ENCODE measurements at regions of chr4 and their contacts with region 1.

Region 1: DNA sequence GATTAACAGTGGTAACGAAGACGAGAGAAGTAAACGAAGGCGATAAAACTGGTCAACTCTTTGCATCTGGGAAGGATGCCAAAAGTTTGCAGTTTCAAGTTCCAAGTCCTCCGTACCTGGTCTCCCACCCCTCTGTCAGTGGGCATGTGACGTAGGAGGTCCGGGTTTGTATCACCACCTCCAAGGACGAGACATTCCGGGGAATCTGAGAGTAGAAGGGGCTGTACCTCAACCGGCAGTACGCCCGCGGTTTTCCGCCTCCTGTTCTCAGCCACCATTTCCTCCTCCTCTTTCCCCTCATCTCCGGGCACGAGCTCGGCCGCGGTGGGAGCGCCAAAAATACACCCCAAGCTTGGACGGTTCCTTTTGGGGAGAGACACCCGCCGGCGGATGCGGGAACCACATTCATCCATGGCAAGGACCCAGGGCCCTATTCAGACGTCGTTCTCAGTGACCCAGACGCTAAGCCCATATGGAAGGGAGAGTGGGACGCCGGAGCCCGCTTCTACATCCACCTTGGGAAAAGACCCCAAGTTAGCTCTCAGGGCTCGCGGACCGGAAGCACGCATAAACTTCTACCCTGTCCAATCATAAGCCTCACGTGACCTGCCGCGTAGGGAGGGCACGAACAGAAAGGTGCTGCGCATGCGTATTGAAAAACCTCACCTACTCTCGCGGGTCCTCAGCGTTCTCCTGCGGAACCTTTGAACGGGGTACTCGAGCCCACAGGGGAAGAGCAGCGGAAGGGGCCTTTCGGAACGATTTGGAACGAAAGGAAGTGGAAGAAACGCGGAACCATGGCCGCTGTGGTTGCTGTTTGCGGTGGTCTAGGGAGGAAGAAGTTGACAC is at the starts of genes HELQ and MRPS18C:
- DNase-seq: peak; percentile 98
- ATAC-seq: peak; percentile 95
- H3K4me3 ChIP-seq: peak within 1 kb of the TSS; percentile 84
- H3K27ac ChIP-seq: peak within 1 kb of the TSS; percentile 99
- H3K4me1 ChIP-seq: no peaks in the 10 kb centered on the region
- H3K27me3 ChIP-seq: no peaks in the 10 kb centered on the region
- CTCF ChIP-seq: peak in 2 of 3 experiments; percentile 4 to 33; a peak in 1 of 6 replicates
- EP300 ChIP-seq: 0 out of 4 replicates have a peak, but pooled peaks of 1 of the 2 experiments have one; percentile 20
- POLR2A ChIP-seq: peak; percentile 97
- RAD21 ChIP-seq: no peak
- polyA plus RNA-seq, gene HELQ: 4.5 to 4.6 TPM
- polyA plus RNA-seq, gene MRPS18C: 277 to 283 TPM

Region 2: GRCh38 chr4:82890901-82891706 is 564.4 kb before region 1 on chr4 and contains the start of gene SEC31A:
- CTCF ChIA-PET with region 1: no interaction called
- POLR2A ChIA-PET with region 1: no interaction called
- RAD21 ChIA-PET with region 1: no interaction called
- SMC1A ChIA-PET with region 1: no interaction called
- in situ Hi-C with region 1: no loop called
- intact Hi-C with region 1: loop called (anchors 5 kb)
- DNase-seq: peak; percentile 84
- ATAC-seq: peak; percentile 90
- H3K4me3 ChIP-seq: peak within 1 kb of the TSS; percentile 90
- H3K27ac ChIP-seq: peak within 1 kb of the TSS; percentile 94
- H3K4me1 ChIP-seq: peaks cover 3% of the 10 kb centered on the region; the same call in 1 of the 2 replicates
- H3K27me3 ChIP-seq: no peaks in the 10 kb centered on the region
- CTCF ChIP-seq: 0 out of 6 replicates have a peak, but pooled peaks of 1 of the 3 experiments have one; percentile 15
- EP300 ChIP-seq: peak in 1 of 2 experiments; percentile 31; a peak in 1 of 4 replicates
- POLR2A ChIP-seq: peak; percentile 99
- RAD21 ChIP-seq: no peak
- polyA plus RNA-seq, gene SEC31A: 74.6 to 80.8 TPM

Region 3: GRCh38 chr4:83034630-83035494 is 420.6 kb before region 1 on chr4 and contains the start of gene COPS4:
- CTCF ChIA-PET with region 1: interaction called, 3 read pairs
- POLR2A ChIA-PET with region 1: interaction called, 4 read pairs
- RAD21 ChIA-PET with region 1: no interaction called
- SMC1A ChIA-PET with region 1: no interaction called
- in situ Hi-C with region 1: no loop called
- intact Hi-C with region 1: loop called (anchors 10 kb)
- DNase-seq: peak; percentile 100
- ATAC-seq: peak; percentile 96
- H3K4me3 ChIP-seq: peak within 1 kb of the TSS; percentile 78
- H3K27ac ChIP-seq: peak within 1 kb of the TSS; percentile 77
- H3K4me1 ChIP-seq: peaks cover 6% of the 10 kb centered on the region
- H3K27me3 ChIP-seq: no peaks in the 10 kb centered on the region
- CTCF ChIP-seq: peak in 1 of 3 experiments; percentile 17; a peak in 1 of 6 replicates
- EP300 ChIP-seq: peak; percentile 42 to 66; a peak in 3 of 4 replicates
- POLR2A ChIP-seq: peak; percentile 74
- RAD21 ChIP-seq: 0 out of 2 replicates have a peak, but pooled peaks have one; percentile 15
- polyA plus RNA-seq, gene COPS4: 112 to 159 TPM

Region 4: DNA sequence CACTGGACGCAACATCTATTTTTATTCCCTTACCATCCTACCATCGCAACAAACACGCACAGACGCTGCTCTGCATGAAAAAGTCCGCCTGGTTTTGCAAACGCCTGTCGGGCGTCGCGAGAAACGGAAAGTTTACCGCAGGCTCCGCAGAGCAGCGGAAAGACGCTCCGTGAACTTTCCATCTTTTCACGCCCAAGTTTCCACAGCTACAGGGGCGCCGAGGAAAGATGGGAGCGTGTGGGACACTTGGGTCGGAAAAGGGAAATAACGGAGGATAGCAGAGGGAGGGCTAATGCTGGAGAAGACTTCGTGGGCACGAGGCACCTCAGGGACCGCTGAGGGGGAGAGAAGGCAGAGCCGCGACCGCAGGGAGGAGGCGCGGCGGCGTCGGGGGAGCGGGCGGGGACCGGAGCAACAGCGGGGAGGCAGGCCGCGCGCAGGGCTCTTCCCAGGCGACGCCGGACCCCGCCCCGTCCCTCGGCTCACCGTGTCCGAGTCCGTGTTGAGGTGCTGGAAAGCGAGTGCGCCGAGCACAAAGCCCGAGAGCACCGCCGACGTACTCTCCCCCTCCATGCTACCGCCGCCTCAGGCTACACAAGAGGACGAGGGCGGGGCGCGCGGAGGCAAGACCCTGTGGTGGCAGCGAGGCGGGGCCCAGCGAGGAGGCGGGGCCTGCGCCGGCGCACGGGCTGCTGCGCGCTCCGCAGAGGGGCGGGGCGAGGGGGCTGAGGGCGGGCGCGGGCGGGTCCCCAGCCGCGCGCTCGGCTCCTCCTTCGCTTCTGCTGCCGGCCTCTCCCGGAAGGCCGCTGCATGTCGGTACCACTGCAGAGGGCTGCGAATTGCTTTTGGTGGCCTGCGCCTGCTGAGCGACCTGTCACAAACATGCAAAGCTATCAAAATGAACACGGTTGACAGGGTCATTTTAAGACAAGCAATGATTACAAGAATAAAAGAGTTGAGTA is 29.3 kb after region 1 on chr4 and contains the start of gene ABRAXAS1:
- CTCF ChIA-PET with region 1: interaction called, 3 read pairs
- POLR2A ChIA-PET with region 1: interaction called, 5 read pairs
- RAD21 ChIA-PET with region 1: no interaction called
- SMC1A ChIA-PET with region 1: interaction called, 6 read pairs
- in situ Hi-C with region 1: no loop called
- intact Hi-C with region 1: loop called (anchors 2 kb)
- DNase-seq: peak; percentile 45
- ATAC-seq: peak; percentile 98
- H3K4me3 ChIP-seq: peak within 1 kb of the TSS; percentile 75
- H3K27ac ChIP-seq: peak within 1 kb of the TSS; percentile 24
- H3K4me1 ChIP-seq: peaks cover 6% of the 10 kb centered on the region; the same call in 1 of the 2 replicates
- H3K27me3 ChIP-seq: no peaks in the 10 kb centered on the region
- CTCF ChIP-seq: no peak
- EP300 ChIP-seq: no peak
- POLR2A ChIP-seq: peak; percentile 93
- RAD21 ChIP-seq: no peak
- polyA plus RNA-seq, gene ABRAXAS1: 2.2 to 3.2 TPM

Region 5: DNA sequence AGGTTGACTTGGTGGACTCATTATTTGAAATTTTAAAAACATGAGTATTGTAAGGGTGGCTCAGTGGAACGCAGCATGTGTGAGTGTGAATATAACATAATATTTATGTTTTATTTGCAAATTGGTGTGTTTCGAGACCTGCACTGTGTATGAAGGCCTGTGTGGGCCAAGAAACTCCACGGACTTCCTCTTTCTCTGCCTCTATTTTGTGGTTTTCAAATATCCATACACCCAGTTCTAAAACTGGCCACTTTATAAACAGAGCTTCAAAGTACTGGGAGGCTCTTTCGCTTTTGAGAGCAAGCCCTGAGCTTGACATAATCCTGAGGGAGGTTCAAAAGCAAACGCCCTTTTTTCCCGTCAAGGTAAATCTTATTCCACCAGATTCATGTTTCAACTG is 268.1 kb after region 1 on chr4:
- CTCF ChIA-PET with region 1: no interaction called
- POLR2A ChIA-PET with region 1: no interaction called
- RAD21 ChIA-PET with region 1: no interaction called
- SMC1A ChIA-PET with region 1: no interaction called
- in situ Hi-C with region 1: no loop called
- intact Hi-C with region 1: no loop called
- DNase-seq: no peak
- ATAC-seq: no peak
- H3K4me3 ChIP-seq: no peak overlapping the region
- H3K27ac ChIP-seq: no peak overlapping the region
- H3K4me1 ChIP-seq: no peaks in the 10 kb centered on the region
- H3K27me3 ChIP-seq: no peaks in the 10 kb centered on the region
- CTCF ChIP-seq: no peak
- EP300 ChIP-seq: no peak
- POLR2A ChIP-seq: no peak
- RAD21 ChIP-seq: no peak

Measured in GM12878 (cell line).